GM12878 (cell line): ENCODE measurements at regions of chr3 and their contacts with region 1.

Region 1: DNA sequence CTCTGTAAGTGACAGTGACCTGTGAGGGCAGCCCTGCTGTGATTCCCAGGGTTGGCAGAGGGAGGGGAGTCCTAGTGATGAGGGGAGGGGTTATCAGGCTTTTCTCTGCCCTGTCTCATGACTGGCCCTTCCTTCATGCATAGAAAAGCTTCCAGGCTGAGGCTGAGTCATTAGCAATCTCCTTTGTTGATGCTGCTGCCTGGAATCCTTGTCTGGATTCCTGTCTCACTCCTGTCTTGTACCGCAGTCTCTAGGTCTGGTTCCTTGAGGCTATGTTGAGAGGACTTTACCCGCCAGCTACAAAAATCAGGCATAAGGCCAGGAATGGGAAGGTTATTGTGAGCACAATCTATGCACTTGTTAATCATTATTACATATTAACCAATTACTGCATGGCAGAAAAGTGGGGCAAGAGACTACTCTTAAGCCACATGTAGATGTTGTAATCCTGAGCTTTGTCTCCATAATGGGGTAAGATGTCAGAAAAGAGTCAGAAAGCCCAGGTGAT is 7.2 kb downstream of the KLHL6 start:
- DNase-seq: no peak
- ATAC-seq: no peak
- H3K4me3 ChIP-seq: no peak overlapping the region
- H3K27ac ChIP-seq: no peak overlapping the region
- H3K4me1 ChIP-seq: peaks cover 8% of the 10 kb centered on the region
- H3K27me3 ChIP-seq: no peaks in the 10 kb centered on the region; a peak in 1 of 4 replicates
- CTCF ChIP-seq: no peak
- EP300 ChIP-seq: no peak
- POLR2A ChIP-seq: no peak
- RAD21 ChIP-seq: no peak

Region 2: GRCh38 chr3:182740710-182741109 is 807.6 kb before region 1 on chr3:
- CTCF ChIA-PET with region 1: no interaction called
- POLR2A ChIA-PET with region 1: no interaction called
- RAD21 ChIA-PET with region 1: no interaction called
- SMC1A ChIA-PET with region 1: no interaction called
- in situ Hi-C with region 1: no loop called
- intact Hi-C with region 1: no loop called
- DNase-seq: no peak
- ATAC-seq: peak; percentile 28; the same call in 1 of the 3 replicates
- H3K4me3 ChIP-seq: no peak overlapping the region
- H3K27ac ChIP-seq: no peak overlapping the region
- H3K4me1 ChIP-seq: no peaks in the 10 kb centered on the region; the same call in 1 of the 2 replicates
- H3K27me3 ChIP-seq: no peaks in the 10 kb centered on the region
- CTCF ChIP-seq: no peak
- EP300 ChIP-seq: no peak
- POLR2A ChIP-seq: no peak
- RAD21 ChIP-seq: no peak

Region 3: GRCh38 chr3:183468424-183468823 is 79.9 kb before region 1 on chr3:
- CTCF ChIA-PET with region 1: interaction called, 22 read pairs
- POLR2A ChIA-PET with region 1: interaction called, 3 read pairs
- RAD21 ChIA-PET with region 1: interaction called, 27 read pairs
- SMC1A ChIA-PET with region 1: interaction called, 11 read pairs
- in situ Hi-C with region 1: no loop called
- intact Hi-C with region 1: no loop called
- DNase-seq: no peak
- ATAC-seq: no peak
- H3K4me3 ChIP-seq: no peak overlapping the region
- H3K27ac ChIP-seq: no peak overlapping the region
- H3K4me1 ChIP-seq: no peaks in the 10 kb centered on the region
- H3K27me3 ChIP-seq: no peaks in the 10 kb centered on the region
- CTCF ChIP-seq: no peak
- EP300 ChIP-seq: no peak
- POLR2A ChIP-seq: no peak
- RAD21 ChIP-seq: no peak

Region 4: GRCh38 chr3:183481582-183481981 is 66.7 kb before region 1 on chr3:
- CTCF ChIA-PET with region 1: interaction called, 13 read pairs
- POLR2A ChIA-PET with region 1: interaction called, 4 read pairs
- RAD21 ChIA-PET with region 1: interaction called, 8 read pairs
- SMC1A ChIA-PET with region 1: interaction called, 9 read pairs
- in situ Hi-C with region 1: no loop called
- intact Hi-C with region 1: no loop called
- DNase-seq: no peak
- ATAC-seq: peak; percentile 6; the same call in 2 of the 3 replicates
- H3K4me3 ChIP-seq: no peak overlapping the region
- H3K27ac ChIP-seq: no peak overlapping the region
- H3K4me1 ChIP-seq: no peaks in the 10 kb centered on the region
- H3K27me3 ChIP-seq: no peaks in the 10 kb centered on the region
- CTCF ChIP-seq: no peak
- EP300 ChIP-seq: no peak
- POLR2A ChIP-seq: no peak
- RAD21 ChIP-seq: no peak

Region 5: GRCh38 chr3:183527428-183528379 is 20.6 kb before region 1 on chr3:
- CTCF ChIA-PET with region 1: interaction called, 37 read pairs
- POLR2A ChIA-PET with region 1: interaction called, 51 read pairs
- RAD21 ChIA-PET with region 1: interaction called, 77 read pairs
- SMC1A ChIA-PET with region 1: interaction called, 130 read pairs
- in situ Hi-C with region 1: no loop called
- intact Hi-C with region 1: no loop called
- DNase-seq: peak; percentile 73
- ATAC-seq: peak; percentile 82
- H3K4me3 ChIP-seq: no peak overlapping the region; the same call in 1 of the 2 replicates
- H3K27ac ChIP-seq: peak overlapping the region; percentile 67
- H3K4me1 ChIP-seq: peaks cover 39% of the 10 kb centered on the region
- H3K27me3 ChIP-seq: no peaks in the 10 kb centered on the region
- CTCF ChIP-seq: no peak
- EP300 ChIP-seq: peak; percentile 93 to 96
- POLR2A ChIP-seq: no peak
- RAD21 ChIP-seq: peak; percentile 16; the same call in 1 of the 2 replicates

Region 6: DNA sequence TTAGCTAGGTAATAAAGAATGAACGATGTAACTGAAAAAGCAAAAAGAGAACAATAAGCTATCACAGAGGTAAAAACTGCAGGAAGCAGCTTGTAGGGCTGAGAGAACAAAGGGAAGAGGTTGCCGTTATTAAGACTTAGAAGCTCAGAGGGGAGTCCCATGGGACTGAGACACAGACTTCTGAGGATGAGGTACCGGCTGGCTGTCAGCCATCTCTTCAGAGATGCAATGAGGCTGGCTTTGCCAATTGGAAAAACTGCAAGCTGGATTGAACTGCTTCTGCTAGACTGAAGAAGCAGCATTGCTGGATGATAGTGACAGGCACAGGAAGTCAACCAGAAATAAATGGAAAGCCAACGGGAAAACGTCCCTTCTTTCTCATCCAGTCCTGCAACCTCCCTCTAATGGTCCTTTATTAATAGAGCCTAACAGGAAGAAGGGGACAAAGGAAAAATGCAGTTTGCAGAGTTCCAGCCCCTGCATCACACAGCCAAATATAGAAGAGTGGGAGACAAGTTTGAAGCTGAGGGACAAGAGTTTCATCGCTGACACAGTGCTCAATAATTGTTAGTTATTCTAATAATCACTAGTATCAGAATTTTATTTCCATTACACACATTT is 28.3 kb after region 1 on chr3:
- CTCF ChIA-PET with region 1: interaction called, 4 read pairs
- POLR2A ChIA-PET with region 1: interaction called, 7 read pairs
- RAD21 ChIA-PET with region 1: interaction called, 79 read pairs
- SMC1A ChIA-PET with region 1: interaction called, 16 read pairs
- in situ Hi-C with region 1: no loop called
- intact Hi-C with region 1: no loop called
- DNase-seq: no peak
- ATAC-seq: no peak
- H3K4me3 ChIP-seq: no peak overlapping the region
- H3K27ac ChIP-seq: no peak overlapping the region
- H3K4me1 ChIP-seq: peaks cover 8% of the 10 kb centered on the region; the same call in 1 of the 2 replicates
- H3K27me3 ChIP-seq: peaks cover 0 to 21% of the 10 kb centered on the region in 2 experiments; a peak in 2 of 4 replicates
- CTCF ChIP-seq: no peak
- EP300 ChIP-seq: no peak
- POLR2A ChIP-seq: no peak
- RAD21 ChIP-seq: no peak

Region 7: DNA sequence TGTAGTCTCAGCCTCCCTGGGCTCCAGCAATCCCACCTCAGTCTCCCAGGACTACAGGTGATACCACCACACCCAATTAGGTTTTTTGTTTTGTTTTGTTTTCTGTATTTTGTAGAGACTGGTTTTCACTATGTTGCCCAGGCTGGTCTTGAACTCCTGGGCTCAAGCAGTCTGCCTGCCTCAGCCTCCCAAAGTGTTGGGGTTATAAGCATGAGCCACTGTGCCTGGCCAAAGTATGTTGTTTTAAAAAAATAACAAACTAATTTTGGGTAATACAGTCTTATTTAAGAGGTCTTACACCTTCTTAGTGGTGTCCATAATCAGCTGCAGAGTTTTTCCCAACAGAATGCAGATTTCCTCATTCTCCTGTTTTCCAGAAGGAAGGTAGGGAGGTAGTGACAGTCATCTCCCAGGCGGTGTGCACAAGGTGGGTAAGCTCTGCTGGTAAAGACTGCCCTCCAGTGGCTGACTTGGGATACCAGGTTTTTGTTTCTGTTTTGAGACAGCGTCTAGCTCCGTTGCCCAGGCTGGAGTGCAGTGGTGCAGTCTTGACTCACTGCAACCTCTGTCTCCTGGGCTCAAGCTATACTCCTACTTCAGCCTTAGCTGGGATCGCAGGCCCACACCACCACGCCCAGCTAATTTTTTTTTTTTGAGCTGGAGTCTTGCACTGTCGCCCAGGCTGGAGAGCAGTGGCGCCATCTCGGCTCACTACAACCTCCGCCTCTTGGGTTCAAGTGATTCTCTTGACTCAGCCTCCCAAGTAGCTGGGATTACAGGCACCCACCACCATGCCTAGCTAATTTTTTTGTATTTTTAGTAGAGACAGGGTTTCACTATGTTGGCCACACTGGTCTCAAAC is 218.7 kb after region 1 on chr3:
- CTCF ChIA-PET with region 1: interaction called, 7 read pairs
- POLR2A ChIA-PET with region 1: no interaction called
- RAD21 ChIA-PET with region 1: interaction called, 3 read pairs
- SMC1A ChIA-PET with region 1: no interaction called
- in situ Hi-C with region 1: no loop called
- intact Hi-C with region 1: loop called (anchors 2 kb)
- DNase-seq: no peak
- ATAC-seq: peak; percentile 99
- H3K4me3 ChIP-seq: no peak overlapping the region
- H3K27ac ChIP-seq: no peak overlapping the region
- H3K4me1 ChIP-seq: no peaks in the 10 kb centered on the region
- H3K27me3 ChIP-seq: no peaks in the 10 kb centered on the region
- CTCF ChIP-seq: peak; percentile 67 to 82 (median 79)
- EP300 ChIP-seq: no peak
- POLR2A ChIP-seq: no peak
- RAD21 ChIP-seq: peak; percentile 89